AG04449 (cell line): ENCODE measurements at regions of chr12 and their contacts with region 1.

Region 1: GRCh38 chr12:104381731-104382480 is 74.8 kb upstream of the CHST11 start:
- DNase-seq: no peak
- H3K4me3 ChIP-seq: no peak overlapping the region
- CTCF ChIP-seq: peak; percentile 88

Region 2: GRCh38 chr12:104121001-104121400 is 260.9 kb before region 1 on chr12:
- CTCF ChIA-PET with region 1: no interaction called
- POLR2A ChIA-PET with region 1: no interaction called
- DNase-seq: no peak
- H3K4me3 ChIP-seq: no peak overlapping the region
- CTCF ChIP-seq: no peak

Region 3: GRCh38 chr12:104371043-104371870 is 10.6 kb before region 1 on chr12:
- CTCF ChIA-PET with region 1: interaction called, 32 read pairs
- POLR2A ChIA-PET with region 1: no interaction called
- DNase-seq: no peak
- H3K4me3 ChIP-seq: no peak overlapping the region
- CTCF ChIP-seq: no peak

Region 4: DNA sequence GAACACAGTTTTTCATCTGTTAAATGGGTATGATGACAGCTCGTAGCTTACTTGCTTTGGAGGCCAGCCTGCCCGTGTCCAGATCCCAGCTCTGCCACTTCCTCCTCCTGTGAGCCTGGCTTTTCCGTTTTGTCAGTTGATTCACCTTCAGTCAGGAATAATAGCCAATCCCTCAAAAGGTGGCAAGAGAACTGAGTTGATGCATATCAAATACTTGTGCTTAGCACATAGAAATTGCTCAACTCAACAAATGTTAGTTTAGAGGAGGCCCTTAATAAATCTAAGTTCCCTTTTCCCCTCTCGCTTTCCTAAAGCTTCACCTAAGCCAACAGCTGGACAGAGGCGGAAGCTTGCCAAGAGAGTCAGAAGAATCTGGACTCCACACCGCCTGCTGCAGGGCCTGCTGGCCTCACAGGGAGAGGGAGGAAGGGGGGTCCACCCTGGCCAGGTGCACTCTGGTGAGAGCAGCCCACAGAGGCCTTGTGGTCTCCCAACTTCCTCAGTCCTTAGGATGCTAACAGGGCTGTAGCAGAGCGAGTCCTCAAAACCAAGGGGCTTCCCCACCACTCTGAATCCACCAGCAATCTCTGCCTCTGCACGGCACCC is 287.9 kb after region 1 on chr12:
- CTCF ChIA-PET with region 1: interaction called, 11 read pairs
- POLR2A ChIA-PET with region 1: no interaction called
- DNase-seq: no peak
- H3K4me3 ChIP-seq: no peak overlapping the region
- CTCF ChIP-seq: no peak

Region 5: GRCh38 chr12:104852102-104852501 is 470.2 kb after region 1 on chr12:
- CTCF ChIA-PET with region 1: interaction called, 10 read pairs
- POLR2A ChIA-PET with region 1: no interaction called
- DNase-seq: peak; percentile 63
- H3K4me3 ChIP-seq: no peak overlapping the region
- CTCF ChIP-seq: no peak

Region 6: GRCh38 chr12:104870797-104871196 is 488.9 kb after region 1 on chr12:
- CTCF ChIA-PET with region 1: interaction called, 144 read pairs
- POLR2A ChIA-PET with region 1: no interaction called
- DNase-seq: no peak
- H3K4me3 ChIP-seq: no peak overlapping the region
- CTCF ChIP-seq: no peak

Region 7: DNA sequence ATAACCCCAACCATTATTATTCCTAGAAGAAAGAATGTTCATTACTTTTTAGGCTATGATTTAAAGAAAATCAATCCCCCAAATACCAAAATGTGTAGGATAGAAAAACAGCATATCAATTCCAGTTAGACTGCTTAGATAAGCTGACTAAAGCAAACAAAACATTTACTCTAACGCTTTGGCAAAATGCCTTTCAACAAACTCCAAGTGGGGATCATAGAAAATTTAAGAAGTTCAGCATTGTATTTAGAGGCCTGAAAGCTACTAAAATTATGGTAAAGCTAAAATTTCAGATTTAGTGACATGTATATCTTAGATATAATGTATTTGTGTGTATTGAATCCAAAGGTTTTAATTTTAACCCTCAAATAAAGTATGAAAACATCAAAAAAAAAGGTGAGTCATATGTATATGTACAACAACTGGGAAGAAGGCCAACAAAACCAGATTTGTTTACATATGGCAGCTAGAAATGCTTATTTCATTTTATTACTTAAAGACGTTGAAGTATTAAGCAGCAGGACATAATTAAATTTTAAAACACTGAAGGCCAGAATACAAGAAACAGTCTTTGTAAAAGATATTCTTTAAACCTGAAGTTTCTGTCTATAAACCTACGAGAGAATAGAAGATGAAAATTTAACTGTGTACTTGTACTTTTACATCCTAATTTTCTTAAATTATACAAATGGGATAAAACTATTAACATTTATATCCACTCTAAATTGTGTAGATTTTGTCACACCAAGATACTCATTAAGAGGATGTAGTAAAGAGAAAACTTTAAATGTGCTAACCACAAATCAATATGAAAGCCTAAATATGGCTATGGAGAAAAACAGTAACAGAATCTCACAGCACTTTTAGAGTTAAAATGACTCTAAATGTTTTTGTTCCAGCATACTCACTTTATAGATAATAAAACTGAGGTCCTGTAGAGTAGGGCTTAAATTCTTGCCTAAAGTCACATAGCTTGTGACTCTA is 504.8 kb after region 1 on chr12:
- CTCF ChIA-PET with region 1: interaction called, 41 read pairs
- POLR2A ChIA-PET with region 1: no interaction called
- DNase-seq: no peak
- H3K4me3 ChIP-seq: no peak overlapping the region
- CTCF ChIP-seq: no peak